Endothelial cell of umbilical vein (primary cell): ENCODE measurements at regions of chr17 and their contacts with region 1.

Region 1: GRCh38 chr17:63621766-63622519 is at the start of gene MAP3K3:
- DNase-seq: peak; percentile 100
- H3K4me3 ChIP-seq: peak within 1 kb of the TSS; percentile 78 to 97 (median 80)
- H3K27ac ChIP-seq: peak within 1 kb of the TSS; percentile 53
- H3K4me1 ChIP-seq: peaks cover 27% of the 10 kb centered on the region
- H3K27me3 ChIP-seq: no peaks in the 10 kb centered on the region
- CTCF ChIP-seq: peak in 1 of 2 donors; percentile 24
- POLR2A ChIP-seq: peak; percentile 93
- total RNA-seq, gene MAP3K3: 81.0 and 91.4 TPM in 2 replicates

Region 2: DNA sequence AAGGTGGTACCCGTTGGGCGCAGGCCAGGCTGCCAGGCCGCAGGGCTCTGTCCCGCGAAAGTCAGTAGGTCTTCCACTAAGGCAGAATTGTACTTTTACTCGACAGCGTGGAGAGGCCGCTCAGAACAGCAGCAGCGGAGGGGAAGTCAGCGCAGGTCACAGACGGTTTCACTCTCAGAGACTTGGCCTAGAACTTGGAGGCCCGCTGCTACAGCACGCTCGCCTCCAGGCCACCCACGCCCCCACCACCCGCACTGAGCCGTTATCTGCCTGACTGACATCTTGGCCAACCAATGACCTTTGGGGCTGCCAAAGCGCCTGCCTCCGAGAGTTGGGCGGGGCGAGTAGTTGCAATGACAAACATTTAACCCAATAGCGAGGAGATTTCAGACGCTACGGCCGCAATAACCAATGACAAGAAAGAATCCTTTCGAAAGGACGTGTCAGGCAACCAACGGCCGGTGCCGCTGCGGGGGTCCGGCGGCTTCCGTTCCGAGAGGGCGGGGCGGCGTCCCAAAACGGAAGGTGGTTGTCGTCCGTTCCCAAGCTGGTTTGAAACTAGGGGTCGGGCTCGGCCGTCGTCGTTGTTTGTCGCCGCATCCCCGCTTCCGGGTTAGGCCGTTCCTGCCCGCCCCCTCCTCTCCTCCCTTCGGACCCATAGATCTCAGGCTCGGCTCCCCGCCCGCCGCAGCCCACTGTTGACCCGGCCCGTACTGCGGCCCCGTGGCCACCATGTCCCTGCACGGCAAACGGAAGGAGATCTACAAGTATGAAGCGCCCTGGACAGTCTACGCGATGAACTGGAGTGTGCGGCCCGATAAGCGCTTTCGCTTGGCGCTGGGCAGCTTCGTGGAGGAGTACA is 71.8 kb before region 1 on chr17 and contains the start of gene DCAF7:
- CTCF ChIA-PET with region 1: interaction called, 4 read pairs
- POLR2A ChIA-PET with region 1: no interaction called
- dilution Hi-C with region 1: no loop called
- intact Hi-C with region 1: loop called (anchors 1 kb)
- DNase-seq: peak; percentile 100
- H3K4me3 ChIP-seq: peak within 1 kb of the TSS; percentile 42 to 77 (median 64)
- H3K27ac ChIP-seq: peak within 1 kb of the TSS; percentile 42
- H3K4me1 ChIP-seq: peaks cover 14% of the 10 kb centered on the region
- H3K27me3 ChIP-seq: no peaks in the 10 kb centered on the region
- CTCF ChIP-seq: no peak
- POLR2A ChIP-seq: peak; percentile 74
- total RNA-seq, gene DCAF7: 89.6 and 100 TPM in 2 replicates

Region 3: GRCh38 chr17:63634163-63634562 is 12.2 kb after region 1 on chr17:
- CTCF ChIA-PET with region 1: interaction called, 12 read pairs
- POLR2A ChIA-PET with region 1: interaction called, 4 read pairs
- dilution Hi-C with region 1: no loop called
- intact Hi-C with region 1: loop called (anchors 1 kb)
- DNase-seq: peak; percentile 83
- H3K4me3 ChIP-seq: peak overlapping the region in 1 of 3 experiments; percentile 60
- H3K27ac ChIP-seq: peak overlapping the region; percentile 79
- H3K4me1 ChIP-seq: peaks cover 36% of the 10 kb centered on the region
- H3K27me3 ChIP-seq: no peaks in the 10 kb centered on the region
- CTCF ChIP-seq: no peak
- POLR2A ChIP-seq: no peak

Region 4: DNA sequence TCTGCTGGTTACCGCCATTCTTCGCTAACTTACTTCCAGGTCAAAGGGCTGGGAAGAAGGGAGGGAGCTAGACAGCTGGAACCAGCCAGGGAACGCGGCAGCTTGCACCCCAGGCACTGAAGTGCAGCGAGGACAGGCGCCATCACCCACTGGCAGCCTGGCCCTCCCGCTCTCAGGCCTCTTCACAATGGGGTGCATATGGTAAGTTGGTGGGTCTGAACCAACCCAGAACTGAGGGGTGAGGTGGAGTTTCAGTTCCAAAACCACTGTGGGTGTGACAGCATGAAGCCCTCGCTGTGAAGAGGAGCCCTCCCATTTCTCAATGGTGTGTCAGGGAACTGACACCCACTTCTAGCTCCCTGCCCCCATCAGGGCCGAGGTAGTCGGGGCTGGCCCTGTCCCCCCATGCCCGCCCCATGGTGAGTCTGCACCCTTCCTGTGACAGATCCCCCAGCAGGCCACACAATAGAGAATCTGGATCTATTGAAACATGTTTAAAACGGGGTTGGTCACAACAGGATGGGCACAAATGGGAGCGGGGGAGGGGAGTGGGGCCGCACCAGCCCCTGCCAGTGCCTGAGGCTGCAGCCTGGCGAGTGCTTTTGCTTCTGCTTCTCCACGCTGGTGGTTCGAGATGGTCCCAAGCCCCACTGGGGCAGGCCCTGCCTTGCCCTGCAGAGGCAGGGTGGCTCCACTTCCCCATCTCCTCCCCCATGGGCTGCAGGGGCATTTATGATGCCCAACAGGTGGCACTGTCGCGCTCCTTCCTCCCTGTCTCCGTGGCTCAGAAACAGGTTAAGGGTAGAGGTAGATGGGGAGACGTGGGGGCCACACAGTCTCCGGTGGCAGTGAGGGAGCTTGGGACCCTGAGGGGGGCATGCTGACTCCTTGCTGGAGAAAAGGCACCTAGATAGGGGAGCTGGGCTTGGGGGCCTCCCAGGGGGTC is 75.7 kb after region 1 on chr17:
- CTCF ChIA-PET with region 1: interaction called, 3 read pairs
- POLR2A ChIA-PET with region 1: no interaction called
- dilution Hi-C with region 1: no loop called
- intact Hi-C with region 1: loop called (anchors 1 kb)
- DNase-seq: peak; percentile 44
- H3K4me3 ChIP-seq: no peak overlapping the region
- H3K27ac ChIP-seq: no peak overlapping the region
- H3K4me1 ChIP-seq: peaks cover 20% of the 10 kb centered on the region
- H3K27me3 ChIP-seq: no peaks in the 10 kb centered on the region
- CTCF ChIP-seq: peak; percentile 41 to 61
- POLR2A ChIP-seq: peak; percentile 15

Region 5: GRCh38 chr17:63773381-63774140 is 151.6 kb after region 1 on chr17 and contains the start of gene CCDC47:
- CTCF ChIA-PET with region 1: no interaction called
- POLR2A ChIA-PET with region 1: interaction called, 4 read pairs
- dilution Hi-C with region 1: no loop called
- intact Hi-C with region 1: loop called (anchors 2 kb)
- DNase-seq: peak; percentile 99
- H3K4me3 ChIP-seq: peak within 1 kb of the TSS; percentile 77 to 94 (median 94)
- H3K27ac ChIP-seq: peak within 1 kb of the TSS; percentile 78
- H3K4me1 ChIP-seq: peaks cover 15% of the 10 kb centered on the region
- H3K27me3 ChIP-seq: no peaks in the 10 kb centered on the region
- CTCF ChIP-seq: no peak
- POLR2A ChIP-seq: peak; percentile 89
- total RNA-seq, gene CCDC47: 73.9 and 76.5 TPM in 2 replicates